ENCODE measurements at regions of chr2 and their contacts with region 1.

Region 1: GRCh38 chr2:109254174-109254904 is 125.3 kb downstream of the SH3RF3 start:
- DNase-seq: peak; percentile 67
- ATAC-seq: peak; percentile 68
- H3K4me3 ChIP-seq: peak overlapping the region in 1 of 5 experiments; percentile 11
- H3K4me3 Mint-ChIP-seq: peak overlapping the region; percentile 78
- H3K27ac ChIP-seq: peak overlapping the region; percentile 65 to 83
- H3K27ac Mint-ChIP-seq: peak overlapping the region; percentile 88
- H3K4me1 ChIP-seq: peaks cover 46 to 48% of the 10 kb centered on the region in 2 donors
- H3K4me1 Mint-ChIP-seq: peaks cover 46% of the 10 kb centered on the region
- H3K27me3 ChIP-seq: no peaks in the 10 kb centered on the region
- H3K27me3 Mint-ChIP-seq: no peaks in the 10 kb centered on the region
- CTCF ChIP-seq: no peak

Region 2: DNA sequence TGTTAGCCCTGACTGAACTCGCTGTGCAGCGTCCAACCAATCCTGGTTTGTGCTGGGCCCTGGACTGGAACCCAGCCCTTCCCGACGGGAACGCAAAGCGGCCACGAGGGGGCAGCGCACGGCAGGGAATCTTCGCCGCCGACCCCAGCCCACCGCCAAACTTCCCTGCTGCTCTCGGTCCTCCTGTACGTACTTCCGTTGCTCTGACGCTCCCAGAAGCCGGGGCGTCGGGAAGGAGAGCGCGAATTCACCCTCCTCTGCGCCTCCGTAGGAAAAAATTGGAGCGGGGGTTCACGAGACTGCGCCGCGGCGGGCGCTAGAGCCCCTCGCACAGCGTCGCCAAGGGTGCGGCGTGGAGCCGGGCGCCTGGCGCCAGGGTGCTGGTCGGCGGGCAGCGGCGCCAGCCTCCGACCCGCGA is 126.3 kb before region 1 on chr2:
- CTCF ChIA-PET with region 1: no interaction called
- POLR2A ChIA-PET with region 1: no interaction called
- intact Hi-C with region 1: loop called (anchors 10 kb)
- DNase-seq: peak; percentile 67
- ATAC-seq: peak; percentile 63
- H3K4me3 ChIP-seq: peak overlapping the region; percentile 46 to 77 (median 62)
- H3K4me3 Mint-ChIP-seq: peak overlapping the region; percentile 84
- H3K27ac ChIP-seq: no peak overlapping the region
- H3K27ac Mint-ChIP-seq: no peak overlapping the region
- H3K4me1 ChIP-seq: peaks cover 5 to 10% of the 10 kb centered on the region in 2 donors
- H3K4me1 Mint-ChIP-seq: peaks cover 10% of the 10 kb centered on the region
- H3K27me3 ChIP-seq: peaks cover 0 to 10% (median 2%) of the 10 kb centered on the region in 4 experiments
- H3K27me3 Mint-ChIP-seq: peaks cover 33% of the 10 kb centered on the region
- CTCF ChIP-seq: peak; percentile 82

Region 3: DNA sequence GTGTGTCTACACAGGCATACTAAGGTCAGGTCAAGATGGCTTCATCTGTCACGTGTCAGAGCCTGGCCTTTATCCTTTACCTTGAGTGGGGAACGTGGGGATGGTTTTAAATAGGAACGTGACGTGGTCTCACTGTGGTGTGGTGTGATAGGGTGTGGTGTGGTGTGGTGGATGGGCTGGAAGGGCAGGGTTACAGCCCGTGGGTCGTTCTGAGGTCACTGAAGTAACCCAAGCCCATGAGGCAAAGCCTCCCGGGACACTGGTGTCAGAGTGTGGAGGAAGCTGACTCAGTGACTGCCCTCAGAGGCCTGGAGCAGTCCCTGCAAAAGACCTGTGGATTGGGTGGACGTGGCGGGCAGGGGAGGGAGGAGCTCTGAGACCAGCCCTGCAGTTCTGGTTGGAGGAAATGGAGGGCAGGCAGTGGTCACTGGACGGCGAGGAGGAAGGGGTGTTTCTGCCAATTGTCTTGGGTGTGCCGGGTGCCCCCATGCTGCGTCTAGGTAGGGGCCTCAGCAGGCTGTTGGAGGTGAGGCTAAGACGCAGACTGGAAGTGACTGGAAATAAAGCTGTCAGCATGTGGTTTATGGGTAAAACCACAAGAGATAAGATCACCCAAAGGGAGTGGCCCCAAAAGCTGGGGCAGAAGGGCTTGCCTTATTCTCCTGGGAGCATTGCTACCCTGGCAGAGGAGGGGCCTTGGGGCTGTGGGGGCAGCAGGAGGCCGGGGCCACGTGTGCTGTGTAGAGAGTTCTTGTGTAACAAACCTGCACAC is 40.5 kb before region 1 on chr2:
- CTCF ChIA-PET with region 1: no interaction called
- POLR2A ChIA-PET with region 1: interaction called, 3 read pairs
- intact Hi-C with region 1: loop called (anchors 2 kb)
- DNase-seq: peak; percentile 57
- ATAC-seq: peak; percentile 83
- H3K4me3 ChIP-seq: peak overlapping the region in 1 of 5 experiments; percentile 15
- H3K4me3 Mint-ChIP-seq: peak overlapping the region; percentile 74
- H3K27ac ChIP-seq: no peak overlapping the region
- H3K27ac Mint-ChIP-seq: peak overlapping the region; percentile 85
- H3K4me1 ChIP-seq: peaks cover 50 to 63% of the 10 kb centered on the region in 2 donors
- H3K4me1 Mint-ChIP-seq: peaks cover 72% of the 10 kb centered on the region
- H3K27me3 ChIP-seq: no peaks in the 10 kb centered on the region
- H3K27me3 Mint-ChIP-seq: peaks cover 21% of the 10 kb centered on the region
- CTCF ChIP-seq: no peak